Mammary epithelial cell (primary cell): ENCODE measurements at regions of chr5 and their contacts with region 1.

Region 1: DNA sequence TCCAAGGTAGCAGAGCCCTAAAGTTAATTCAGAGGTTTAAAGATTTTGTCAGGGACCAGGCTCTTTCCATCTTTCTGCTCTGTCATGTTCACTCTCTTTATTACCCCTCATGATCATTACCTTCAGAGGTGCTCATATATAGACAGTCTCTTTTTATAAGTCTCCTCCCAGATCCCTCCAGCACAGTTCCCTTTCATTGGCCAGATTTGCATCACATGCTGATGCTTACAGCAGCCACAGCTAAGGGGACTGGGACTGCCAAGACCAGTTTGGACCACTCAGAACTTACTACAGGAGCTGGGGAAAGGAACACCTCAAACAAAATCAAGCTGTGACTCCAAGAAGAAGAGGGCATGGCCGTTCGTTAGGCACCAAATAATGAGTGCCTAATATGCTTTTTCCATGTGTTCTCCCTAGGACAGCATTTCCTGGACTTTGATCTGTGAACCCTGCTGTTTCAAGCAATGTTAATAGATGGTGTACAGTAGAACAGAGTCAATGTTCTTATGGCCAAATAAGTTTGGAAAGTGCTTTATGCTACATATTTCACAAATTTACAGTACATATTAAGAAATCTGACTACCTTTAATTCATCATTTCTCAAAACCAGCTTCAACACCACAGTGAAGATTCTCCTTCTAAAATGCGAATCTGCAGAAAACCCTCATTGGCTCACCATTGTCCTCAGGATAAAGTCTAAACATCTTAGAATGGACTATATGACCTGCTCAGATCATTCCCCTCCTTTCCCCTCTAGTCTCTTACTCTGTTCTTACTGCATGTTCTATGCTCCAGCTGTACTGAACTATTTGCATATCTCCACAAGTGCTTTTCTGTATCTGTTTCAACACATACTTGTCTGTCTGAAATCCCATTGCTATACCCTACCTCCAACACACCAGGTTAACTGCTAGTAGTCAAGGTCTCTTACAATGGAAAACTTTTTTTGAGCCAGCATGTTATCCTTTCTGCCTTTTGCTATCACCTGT is 3.4 kb downstream of the C5orf58 start:
- DNase-seq: no peak
- H3K4me3 ChIP-seq: no peak overlapping the region
- H3K27ac ChIP-seq: no peak overlapping the region
- H3K4me1 ChIP-seq: no peaks in the 10 kb centered on the region
- H3K27me3 ChIP-seq: peaks cover 11% of the 10 kb centered on the region
- CTCF ChIP-seq: no peak

Region 2: GRCh38 chr5:170411100-170411499 is 174.9 kb after region 1 on chr5:
- CTCF ChIA-PET with region 1: no interaction called
- dilution Hi-C with region 1: no loop called
- in situ Hi-C with region 1: loop called in 1 of 2 experiments (anchors 10 kb)
- intact Hi-C with region 1: no loop called
- DNase-seq: no peak
- H3K4me3 ChIP-seq: no peak overlapping the region
- H3K27ac ChIP-seq: no peak overlapping the region
- H3K4me1 ChIP-seq: no peaks in the 10 kb centered on the region
- H3K27me3 ChIP-seq: no peaks in the 10 kb centered on the region
- CTCF ChIP-seq: no peak